ENCODE measurements at regions of chr1 and their contacts with region 1.

Region 1: DNA sequence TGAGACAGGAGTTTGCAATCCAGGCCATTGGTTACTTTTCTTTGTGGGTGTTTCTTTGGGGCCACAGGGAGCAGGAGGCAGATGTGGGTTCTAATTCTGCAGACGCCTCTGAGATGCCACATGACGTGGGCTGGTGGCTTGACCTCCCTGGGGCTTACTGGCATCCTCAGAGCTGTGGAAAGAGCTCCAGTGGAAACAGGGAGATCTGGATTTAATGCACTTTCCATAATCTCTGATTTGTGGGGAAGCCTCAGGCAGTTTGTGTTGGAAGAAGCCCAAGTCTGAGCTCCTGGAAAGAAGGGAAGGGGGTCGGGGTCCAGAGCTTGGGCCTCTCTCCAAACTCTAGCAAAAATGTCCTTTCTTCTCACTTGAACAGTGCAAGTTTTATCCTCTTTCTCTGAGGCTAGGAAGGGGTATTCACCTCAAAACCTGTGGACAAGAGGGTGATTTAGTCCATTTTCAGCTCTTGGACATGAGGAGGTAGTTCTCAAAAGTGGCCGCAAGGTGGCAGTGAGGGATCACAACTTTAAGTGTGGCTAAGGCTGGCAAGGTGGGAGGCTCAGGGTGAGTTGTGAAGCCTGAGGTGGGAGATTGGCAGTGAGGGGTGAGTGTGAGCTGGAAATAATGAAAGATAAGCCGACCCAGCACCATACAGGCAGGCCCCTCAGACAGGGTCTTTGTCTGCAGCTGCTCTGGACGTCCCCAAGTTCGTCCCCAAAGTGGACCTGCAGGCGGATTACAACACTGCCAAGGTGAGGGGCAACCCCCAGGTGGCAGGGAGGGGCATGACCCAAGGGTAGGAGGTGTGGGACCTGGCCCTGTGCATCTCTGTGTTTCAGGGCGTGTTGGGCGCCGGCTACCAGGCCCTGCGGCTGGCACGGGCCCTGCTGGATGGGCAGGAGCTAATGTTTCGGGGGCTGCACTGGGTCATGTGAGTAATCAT is 9.2 kb downstream of the IKBKE start:
- DNase-seq: peak; percentile 82
- ATAC-seq: peak; percentile 86
- H3K4me3 ChIP-seq: no peak overlapping the region
- H3K27ac ChIP-seq: no peak overlapping the region
- H3K4me1 ChIP-seq: peaks cover 9% of the 10 kb centered on the region
- H3K27me3 ChIP-seq: no peaks in the 10 kb centered on the region
- CTCF ChIP-seq: peak; percentile 79
- POLR2A ChIP-seq: no peak
- RAD21 ChIP-seq: peak; percentile 76

Region 2: DNA sequence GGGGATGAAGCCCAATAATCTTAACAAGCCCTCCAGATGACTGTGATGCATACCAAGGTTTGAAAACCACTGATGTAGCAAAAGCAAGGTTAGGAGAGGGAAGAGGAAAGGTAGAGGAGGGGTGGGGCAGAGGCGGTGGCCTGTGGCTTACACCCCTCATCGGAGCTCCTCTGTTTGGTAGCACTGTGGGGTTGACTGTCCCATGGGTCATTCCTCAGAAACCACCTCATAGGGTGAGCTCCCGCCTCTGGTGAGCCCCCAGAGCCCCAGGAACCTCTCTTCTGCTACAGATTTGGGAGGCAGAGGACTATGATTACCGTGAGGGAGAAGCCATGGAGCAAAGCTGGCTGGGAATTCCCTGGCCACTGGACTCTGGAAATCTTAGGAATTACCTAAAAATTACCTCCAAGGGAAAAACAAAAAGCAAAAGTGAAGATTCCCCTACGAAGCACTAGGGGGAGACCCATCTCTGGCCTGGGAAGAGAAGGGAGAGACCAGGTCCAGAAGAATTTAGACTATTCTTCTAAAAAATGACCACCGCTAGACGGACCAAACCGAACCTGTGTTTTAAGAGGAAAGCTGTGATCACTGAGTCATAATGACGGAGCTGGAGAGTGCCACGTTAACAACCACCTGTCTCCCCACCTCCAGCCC is 26.4 kb after region 1 on chr1:
- CTCF ChIA-PET with region 1: no interaction called
- POLR2A ChIA-PET with region 1: no interaction called
- dilution Hi-C with region 1: no loop called
- in situ Hi-C with region 1: no loop called
- intact Hi-C with region 1: loop called (anchors 2 kb)
- DNase-seq: peak; percentile 54
- ATAC-seq: no peak
- H3K4me3 ChIP-seq: no peak overlapping the region
- H3K27ac ChIP-seq: no peak overlapping the region
- H3K4me1 ChIP-seq: peaks cover 27% of the 10 kb centered on the region
- H3K27me3 ChIP-seq: no peaks in the 10 kb centered on the region
- CTCF ChIP-seq: peak; percentile 71
- POLR2A ChIP-seq: no peak
- RAD21 ChIP-seq: peak; percentile 61

Region 3: GRCh38 chr1:206544562-206545257 is 65.3 kb after region 1 on chr1:
- CTCF ChIA-PET with region 1: no interaction called
- POLR2A ChIA-PET with region 1: no interaction called
- dilution Hi-C with region 1: no loop called
- in situ Hi-C with region 1: loop called (anchors 5 kb)
- intact Hi-C with region 1: no loop called
- DNase-seq: peak; percentile 31
- ATAC-seq: peak; percentile 96
- H3K4me3 ChIP-seq: no peak overlapping the region
- H3K27ac ChIP-seq: no peak overlapping the region
- H3K4me1 ChIP-seq: no peaks in the 10 kb centered on the region
- H3K27me3 ChIP-seq: peaks cover 2% of the 10 kb centered on the region
- CTCF ChIP-seq: peak; percentile 74
- POLR2A ChIP-seq: no peak
- RAD21 ChIP-seq: peak; percentile 68

Measured in IMR-90 (cell line).